GM18951 (cell line): ENCODE measurements at regions of chr6 and their contacts with region 1.

Region 1: GRCh38 chr6:151323791-151324487 is 67.4 kb downstream of the ZBTB2 start:
- POLR2A ChIP-seq: no peak

Region 2: GRCh38 chr6:150891888-150892485 is 432.0 kb before region 1 on chr6:
- in situ Hi-C with region 1: loop called (anchors 10 kb)
- POLR2A ChIP-seq: no peak

Region 3: DNA sequence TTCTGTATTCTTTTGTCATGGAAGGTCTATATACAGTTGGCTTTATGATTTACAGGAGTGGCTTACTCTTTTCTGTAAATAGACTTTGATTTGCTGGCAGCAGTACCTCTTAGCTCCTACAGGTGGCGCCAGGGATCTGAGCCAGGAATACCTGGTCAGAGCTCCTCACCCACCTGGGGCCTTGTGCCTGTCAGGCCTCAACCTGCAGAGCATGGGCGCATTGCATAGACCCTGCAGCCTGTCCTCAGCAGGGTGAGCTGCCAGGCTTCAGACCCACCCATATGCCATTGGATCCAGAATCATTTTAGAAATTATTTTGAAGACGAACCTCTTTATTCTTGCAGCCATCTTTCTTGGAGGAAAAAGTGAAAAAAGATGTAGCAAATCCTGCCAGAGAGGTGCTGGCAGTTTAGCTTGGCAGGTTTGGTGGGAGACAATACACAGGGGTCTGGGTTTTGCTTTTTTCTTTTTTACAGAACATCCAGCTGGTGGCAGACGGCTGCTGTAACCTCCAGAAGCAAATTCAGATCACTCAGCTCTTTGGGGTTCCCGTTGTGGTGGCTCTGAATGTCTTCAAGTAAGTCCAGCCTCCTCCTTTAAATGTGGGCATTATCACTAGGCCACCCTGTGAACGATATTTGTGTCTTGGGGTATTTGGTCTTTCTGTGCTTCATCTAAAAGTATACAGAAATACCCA is 309.4 kb before region 1 on chr6:
- in situ Hi-C with region 1: loop called (anchors 25 kb)
- POLR2A ChIP-seq: no peak